Kidney (tissue), 22 donors: ENCODE measurements at regions of chr15 and their contacts with region 1.

Region 1: DNA sequence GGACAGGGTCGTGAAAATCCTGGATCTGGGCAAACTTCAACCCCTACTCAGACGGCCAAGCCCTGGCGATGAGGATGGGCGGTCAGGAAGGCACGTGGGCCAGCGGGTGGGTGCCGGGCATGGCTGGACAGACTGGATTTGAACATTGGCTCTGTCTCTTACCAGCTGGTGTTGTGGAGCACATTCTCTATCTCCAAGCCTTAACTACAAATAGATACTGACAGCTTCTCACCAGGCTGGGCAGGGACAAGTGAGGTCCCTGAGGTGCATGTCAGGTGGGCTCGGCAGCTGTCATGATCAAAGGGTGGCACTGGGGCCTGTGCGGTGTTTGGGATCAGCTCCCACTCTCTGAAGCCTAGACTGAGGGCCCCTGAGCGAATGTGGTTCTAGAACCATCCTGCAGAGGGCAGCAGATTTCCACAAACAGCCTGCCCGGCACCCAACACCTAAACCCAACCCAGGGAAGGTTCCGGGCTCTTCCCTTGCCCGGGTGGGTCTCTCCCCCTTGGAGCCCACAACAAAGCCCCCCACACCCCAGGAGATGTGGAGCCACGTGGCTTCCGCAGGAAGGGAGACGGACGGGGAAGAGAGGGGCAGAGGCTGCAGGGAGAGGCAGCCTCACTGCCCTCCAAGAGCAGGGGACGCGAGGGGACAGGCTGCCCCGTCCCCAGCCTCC is 58.4 kb downstream of the RGMA start:
- DNase-seq: peak; percentile 76 to 81 (median 77)
- H3K4me3 ChIP-seq: no peak overlapping the region
- H3K27ac ChIP-seq: no peak overlapping the region
- H3K4me1 ChIP-seq: peaks cover 0 to 15% (median 0%) of the 10 kb centered on the region in 3 donors
- H3K27me3 ChIP-seq: no peaks in the 10 kb centered on the region
- CTCF ChIP-seq: peak; percentile 77

Region 2: GRCh38 chr15:92810418-92811138 is 220.0 kb before region 1 on chr15:
- intact Hi-C with region 1: no loop called
- DNase-seq: peak; percentile 51 to 88 (median 75)
- H3K4me3 ChIP-seq: peak overlapping the region; percentile 72 to 98 (median 78)
- H3K27ac ChIP-seq: peak overlapping the region; percentile 98 to 99
- H3K4me1 ChIP-seq: peaks cover 5 to 14% (median 8%) of the 10 kb centered on the region in 3 donors
- H3K27me3 ChIP-seq: no peaks in the 10 kb centered on the region
- CTCF ChIP-seq: no peak

Region 3: GRCh38 chr15:94119923-94120775 is 1089.6 kb after region 1 on chr15:
- intact Hi-C with region 1: loop called (anchors 5 kb)
- DNase-seq: peak in 4 of 5 donors; percentile 75 to 95 (median 86)
- H3K4me3 ChIP-seq: peak overlapping the region in 1 of 3 donors; percentile 15
- H3K27ac ChIP-seq: no peak overlapping the region
- H3K4me1 ChIP-seq: no peaks in the 10 kb centered on the region
- H3K27me3 ChIP-seq: no peaks in the 10 kb centered on the region
- CTCF ChIP-seq: peak; percentile 98